Prostate gland (tissue), 2 donors: ENCODE measurements at regions of chr2 and their contacts with region 1.

Region 1: GRCh38 chr2:118865106-118865505 is 17.7 kb upstream of the EN1 start:
- DNase-seq: no peak
- H3K4me3 ChIP-seq: no peak overlapping the region
- H3K27ac ChIP-seq: no peak overlapping the region
- H3K4me1 ChIP-seq: no peaks in the 10 kb centered on the region
- H3K27me3 ChIP-seq: no peaks in the 10 kb centered on the region
- CTCF ChIP-seq: peak in 3 of 4 experiments; percentile 16 to 54 (median 33)
- POLR2A ChIP-seq: no peak

Region 2: DNA sequence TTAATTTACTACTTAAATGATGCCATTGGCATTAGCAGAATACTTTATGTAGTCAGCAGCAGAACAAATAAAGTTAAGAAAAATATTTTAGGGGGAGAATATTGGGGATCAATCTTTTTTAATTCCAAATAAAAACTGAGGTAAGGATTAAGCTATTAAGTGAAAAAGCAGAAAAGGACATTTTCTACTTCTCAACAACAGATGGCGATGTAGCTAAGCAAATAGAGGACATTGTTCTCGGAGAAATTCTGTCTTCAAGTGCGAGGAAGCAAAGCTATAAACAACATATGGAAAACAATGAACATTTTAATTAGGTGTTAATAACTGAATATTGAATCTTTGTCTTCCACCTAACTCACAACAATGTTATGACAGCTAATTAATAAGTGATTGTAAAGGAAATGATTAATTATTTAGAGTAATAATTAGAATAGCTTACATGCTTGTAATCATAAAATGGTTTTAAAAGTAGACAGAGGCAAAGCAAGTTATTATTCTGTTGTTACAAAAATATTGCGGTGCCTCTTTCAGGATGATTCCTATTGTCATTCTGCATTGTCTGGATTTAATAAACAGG is 818.4 kb before region 1 on chr2:
- intact Hi-C with region 1: loop called (anchors 2 kb)
- DNase-seq: no peak
- H3K4me3 ChIP-seq: no peak overlapping the region
- H3K27ac ChIP-seq: no peak overlapping the region
- H3K4me1 ChIP-seq: no peaks in the 10 kb centered on the region
- H3K27me3 ChIP-seq: no peaks in the 10 kb centered on the region
- CTCF ChIP-seq: peak in 3 of 4 experiments; percentile 37 to 76 (median 68)
- POLR2A ChIP-seq: no peak